H1 (cell line): ENCODE measurements at regions of chr16 and their contacts with region 1.

Region 1: GRCh38 chr16:9008601-9009260 is 45.0 kb upstream of the USP7 start:
- DNase-seq: peak; percentile 61 to 93
- H3K4me3 ChIP-seq: 0 out of 8 replicates have a peak overlapping the region, but pooled peaks of 1 of the 4 experiments have one; percentile 4
- H3K27ac ChIP-seq: no peak overlapping the region
- H3K4me1 ChIP-seq: peaks cover 0 to 10% (median 5%) of the 10 kb centered on the region in 4 experiments; a peak in 6 of 7 replicates
- H3K27me3 ChIP-seq: no peaks in the 10 kb centered on the region; a peak in 1 of 7 replicates
- CTCF ChIP-seq: peak; percentile 87 to 97 (median 97)
- EP300 ChIP-seq: no peak
- POLR2A ChIP-seq: no peak
- RAD21 ChIP-seq: peak; percentile 95 to 98

Region 2: DNA sequence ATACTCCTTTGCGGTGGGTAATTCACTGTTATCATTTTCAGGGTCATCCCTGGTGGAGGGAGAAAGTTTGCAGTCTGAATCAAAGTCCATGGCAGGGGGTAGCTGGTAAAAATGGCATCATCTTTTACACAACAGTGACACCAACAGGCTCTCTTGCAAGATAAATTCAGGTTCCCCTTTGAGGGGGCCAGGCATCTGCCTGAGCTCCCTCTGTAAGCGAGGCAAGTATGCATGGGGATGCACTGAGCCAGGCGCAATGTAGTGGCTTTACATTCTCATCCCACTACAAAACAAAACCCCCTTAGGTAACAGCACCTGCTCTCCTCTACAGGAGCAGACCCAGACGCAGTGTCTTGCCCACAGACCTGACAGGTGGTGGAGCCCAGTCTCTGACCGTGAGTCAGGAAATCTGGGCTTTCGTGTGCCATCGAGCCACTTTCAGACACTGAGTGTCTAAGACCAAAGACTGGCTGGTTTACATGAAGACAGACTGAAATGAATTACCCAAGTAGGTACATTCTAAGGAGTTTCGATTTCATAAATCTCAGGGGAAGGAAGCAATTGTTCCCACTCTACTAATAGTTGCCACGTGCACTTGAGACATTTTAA is 108.9 kb before region 1 on chr16:
- CTCF ChIA-PET with region 1: interaction called, 18 read pairs
- POLR2A ChIA-PET with region 1: no interaction called
- DNase-seq: no peak
- H3K4me3 ChIP-seq: no peak overlapping the region
- H3K27ac ChIP-seq: no peak overlapping the region
- H3K4me1 ChIP-seq: no peaks in the 10 kb centered on the region; a peak in 2 of 7 replicates
- H3K27me3 ChIP-seq: no peaks in the 10 kb centered on the region
- CTCF ChIP-seq: peak in 2 of 3 experiments; percentile 11 to 16; a peak in 3 of 4 replicates
- EP300 ChIP-seq: no peak
- POLR2A ChIP-seq: no peak
- RAD21 ChIP-seq: peak; percentile 24 to 36; a peak in 3 of 4 replicates

Region 3: DNA sequence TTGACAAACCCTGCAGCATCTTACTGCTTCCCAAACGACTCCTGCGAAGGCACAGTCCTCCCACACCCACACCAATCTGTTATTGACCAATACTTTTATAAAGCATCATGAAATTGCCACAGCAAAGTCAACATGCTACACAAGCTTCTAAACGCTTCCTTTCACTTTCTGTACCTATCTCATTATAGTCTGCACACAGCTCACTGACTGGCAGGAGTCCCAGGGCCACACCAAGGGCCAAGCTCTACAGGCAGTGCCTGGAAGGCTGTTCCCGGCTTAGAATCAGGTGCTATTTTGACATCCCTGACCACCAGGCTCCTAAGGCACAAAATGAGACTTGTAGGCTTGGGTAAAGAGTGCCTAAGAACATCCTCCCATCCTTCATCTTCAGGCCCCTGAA is 84.5 kb before region 1 on chr16:
- CTCF ChIA-PET with region 1: interaction called, 39 read pairs
- POLR2A ChIA-PET with region 1: interaction called, 3 read pairs
- DNase-seq: no peak
- H3K4me3 ChIP-seq: no peak overlapping the region
- H3K27ac ChIP-seq: no peak overlapping the region
- H3K4me1 ChIP-seq: no peaks in the 10 kb centered on the region; a peak in 1 of 7 replicates
- H3K27me3 ChIP-seq: no peaks in the 10 kb centered on the region
- CTCF ChIP-seq: no peak
- EP300 ChIP-seq: no peak
- POLR2A ChIP-seq: no peak
- RAD21 ChIP-seq: no peak

Region 4: DNA sequence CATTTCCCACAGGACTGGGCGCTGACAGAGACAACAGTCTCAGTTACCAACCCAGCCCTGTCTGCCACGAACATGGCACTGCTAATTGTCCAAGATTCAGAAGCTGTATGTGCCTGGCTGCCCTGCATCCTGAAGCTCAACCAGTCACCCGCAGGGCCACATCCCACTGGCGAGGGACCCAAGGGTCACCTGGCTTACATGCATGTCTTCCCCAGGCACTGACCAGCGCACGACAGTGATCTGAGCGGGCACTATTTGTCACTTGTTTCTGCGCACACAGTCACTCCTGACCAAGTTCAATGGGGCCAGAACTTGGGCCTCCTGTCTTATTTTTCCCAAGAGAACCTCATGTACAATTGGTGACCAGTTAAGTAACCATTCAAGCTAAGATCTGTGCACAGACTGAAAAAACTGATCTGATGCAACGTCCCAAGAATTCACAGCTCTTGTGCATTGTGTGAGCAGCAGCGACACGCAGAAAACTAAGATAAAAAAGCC is 58.1 kb before region 1 on chr16:
- CTCF ChIA-PET with region 1: interaction called, 14 read pairs
- POLR2A ChIA-PET with region 1: interaction called, 4 read pairs
- DNase-seq: no peak
- H3K4me3 ChIP-seq: no peak overlapping the region
- H3K27ac ChIP-seq: no peak overlapping the region
- H3K4me1 ChIP-seq: peaks cover 14 to 25% (median 19%) of the 10 kb centered on the region in 4 experiments
- H3K27me3 ChIP-seq: no peaks in the 10 kb centered on the region
- CTCF ChIP-seq: no peak
- EP300 ChIP-seq: no peak
- POLR2A ChIP-seq: no peak
- RAD21 ChIP-seq: no peak

Region 5: DNA sequence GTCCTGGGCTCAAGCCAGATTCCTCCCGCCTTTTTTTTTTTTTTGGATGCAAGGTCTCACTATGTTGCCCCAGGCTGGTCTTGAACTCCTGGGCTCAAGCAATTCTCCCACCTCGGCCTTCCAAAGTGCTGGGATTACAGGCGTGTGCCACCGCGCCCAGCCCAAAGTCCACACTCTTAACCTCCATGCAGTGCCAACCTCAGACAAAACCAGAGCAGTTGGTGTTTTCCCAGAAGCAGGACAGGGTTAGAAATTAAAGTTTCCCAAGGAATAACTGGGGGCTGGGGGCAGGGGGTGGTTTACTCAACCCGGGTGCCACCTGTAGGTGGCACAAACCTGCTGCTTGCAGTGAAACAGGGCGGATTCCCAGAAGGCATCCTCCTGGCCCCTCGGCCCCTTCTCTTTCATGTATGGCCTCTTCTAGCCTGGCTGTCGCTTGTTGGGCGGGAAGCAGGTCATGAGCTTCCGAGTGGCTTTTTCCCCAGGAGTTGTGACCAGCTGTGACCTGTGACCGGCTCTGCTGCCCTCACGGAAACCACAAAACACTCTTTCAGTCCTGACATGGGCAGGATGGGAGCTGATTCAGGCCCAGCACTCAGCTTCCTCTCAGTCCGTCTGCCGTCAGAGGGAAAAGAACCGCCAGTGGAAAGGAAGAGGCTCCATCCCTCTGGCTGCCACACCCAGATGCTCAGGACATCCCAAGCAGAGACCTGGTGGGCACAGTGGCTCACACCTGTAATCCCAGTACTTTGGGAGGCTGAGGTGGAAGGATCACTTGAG is 19.4 kb before region 1 on chr16:
- CTCF ChIA-PET with region 1: interaction called, 54 read pairs
- POLR2A ChIA-PET with region 1: interaction called, 4 read pairs
- DNase-seq: no peak
- H3K4me3 ChIP-seq: no peak overlapping the region
- H3K27ac ChIP-seq: no peak overlapping the region
- H3K4me1 ChIP-seq: peaks cover 0 to 4% (median 3%) of the 10 kb centered on the region in 4 experiments; a peak in 4 of 7 replicates
- H3K27me3 ChIP-seq: no peaks in the 10 kb centered on the region; a peak in 1 of 7 replicates
- CTCF ChIP-seq: no peak
- EP300 ChIP-seq: no peak
- POLR2A ChIP-seq: no peak
- RAD21 ChIP-seq: no peak

Region 6: DNA sequence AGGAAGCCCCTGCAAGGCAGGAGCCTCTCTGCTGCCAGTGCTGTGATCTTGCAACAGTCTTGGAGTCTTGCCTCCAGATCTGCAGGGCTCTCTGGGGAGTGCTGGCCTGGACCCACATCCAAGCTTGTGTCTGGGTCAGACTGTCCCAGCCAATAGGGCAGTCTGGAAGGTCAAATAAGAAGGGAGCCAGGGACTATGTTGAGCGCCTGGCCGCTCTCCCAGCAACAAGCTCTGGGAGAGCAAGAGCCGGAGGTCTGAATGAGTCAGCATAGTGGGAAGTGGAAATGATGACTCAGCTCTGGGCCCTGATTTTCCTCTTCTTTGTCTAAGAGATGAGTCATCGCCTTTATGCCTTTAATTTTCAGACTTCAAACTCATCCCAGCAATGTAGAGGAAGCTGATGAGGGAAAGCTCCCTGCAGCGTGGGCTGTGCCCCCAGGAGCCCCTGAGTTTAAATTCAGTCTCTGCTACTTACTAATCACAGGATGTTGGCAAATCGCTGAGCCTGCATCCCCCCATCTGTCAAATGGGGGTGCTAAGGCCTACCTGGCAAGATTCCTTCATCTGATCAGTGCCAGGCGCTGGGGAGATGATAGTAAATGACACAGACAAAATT is 39.1 kb after region 1 on chr16:
- CTCF ChIA-PET with region 1: interaction called, 12 read pairs
- POLR2A ChIA-PET with region 1: no interaction called
- DNase-seq: peak; percentile 50 to 73
- H3K4me3 ChIP-seq: no peak overlapping the region
- H3K27ac ChIP-seq: peak overlapping the region; percentile 23; the same call in 1 of the 2 replicates
- H3K4me1 ChIP-seq: peaks cover 5 to 14% (median 10%) of the 10 kb centered on the region in 4 experiments
- H3K27me3 ChIP-seq: no peaks in the 10 kb centered on the region
- CTCF ChIP-seq: no peak
- EP300 ChIP-seq: no peak
- POLR2A ChIP-seq: no peak
- RAD21 ChIP-seq: no peak